Body of pancreas (tissue), 4 donors: ENCODE measurements at regions of chr7 and their contacts with region 1.

Region 1: DNA sequence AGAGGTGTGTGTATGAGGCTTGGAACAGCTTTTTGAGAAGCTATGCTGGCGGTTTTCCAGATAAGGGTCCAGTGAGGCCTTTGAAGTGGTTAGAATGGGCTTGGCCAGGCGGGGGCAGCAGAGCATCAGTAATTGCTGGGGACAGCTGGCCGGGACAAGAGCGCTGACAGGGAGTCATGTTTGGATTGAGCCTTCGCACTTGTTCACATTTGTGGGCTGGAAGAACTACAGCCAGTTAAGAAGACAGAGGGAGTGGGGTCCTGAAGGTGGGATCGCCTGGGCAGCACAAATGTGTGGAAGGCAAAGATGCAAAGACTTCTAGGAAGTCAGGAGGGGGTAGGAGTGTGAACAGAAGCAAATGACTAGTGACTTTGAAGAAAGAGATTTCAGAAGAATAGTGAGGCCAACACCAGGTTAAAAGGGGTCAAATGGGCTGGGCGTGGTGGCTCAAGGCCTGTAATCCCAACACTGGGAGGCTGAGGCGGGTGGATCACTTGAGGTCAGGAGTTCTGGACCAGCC is 12.7 kb upstream of the SDHAF3 start:
- DNase-seq: peak; percentile 87 to 91 (median 88)
- ATAC-seq: peak; percentile 85
- H3K4me3 ChIP-seq: no peak overlapping the region
- H3K27ac ChIP-seq: no peak overlapping the region
- H3K4me1 ChIP-seq: peaks cover 6% of the 10 kb centered on the region
- H3K27me3 ChIP-seq: peaks cover 0 to 4% of the 10 kb centered on the region in 2 donors
- CTCF ChIP-seq: peak; percentile 55 to 89 (median 84)
- POLR2A ChIP-seq: no peak

Region 2: GRCh38 chr7:97835296-97836138 is 730.7 kb after region 1 on chr7:
- intact Hi-C with region 1: loop called (anchors 10 kb)
- DNase-seq: peak; percentile 71 to 83 (median 76)
- ATAC-seq: peak; percentile 48
- H3K4me3 ChIP-seq: no peak overlapping the region
- H3K27ac ChIP-seq: no peak overlapping the region
- H3K4me1 ChIP-seq: no peaks in the 10 kb centered on the region
- H3K27me3 ChIP-seq: peaks cover 0 to 3% of the 10 kb centered on the region in 2 donors
- CTCF ChIP-seq: peak in 6 of 7 experiments; percentile 51 to 72 (median 56)
- POLR2A ChIP-seq: no peak

Region 3: GRCh38 chr7:97859606-97860204 is 754.9 kb after region 1 on chr7:
- intact Hi-C with region 1: no loop called
- DNase-seq: no peak
- ATAC-seq: no peak
- H3K4me3 ChIP-seq: no peak overlapping the region
- H3K27ac ChIP-seq: no peak overlapping the region
- H3K4me1 ChIP-seq: no peaks in the 10 kb centered on the region
- H3K27me3 ChIP-seq: no peaks in the 10 kb centered on the region
- CTCF ChIP-seq: no peak
- POLR2A ChIP-seq: no peak